Upper lobe of right lung (tissue), 1 donor: ENCODE measurements at regions of chr15 and their contacts with region 1.

Region 1: DNA sequence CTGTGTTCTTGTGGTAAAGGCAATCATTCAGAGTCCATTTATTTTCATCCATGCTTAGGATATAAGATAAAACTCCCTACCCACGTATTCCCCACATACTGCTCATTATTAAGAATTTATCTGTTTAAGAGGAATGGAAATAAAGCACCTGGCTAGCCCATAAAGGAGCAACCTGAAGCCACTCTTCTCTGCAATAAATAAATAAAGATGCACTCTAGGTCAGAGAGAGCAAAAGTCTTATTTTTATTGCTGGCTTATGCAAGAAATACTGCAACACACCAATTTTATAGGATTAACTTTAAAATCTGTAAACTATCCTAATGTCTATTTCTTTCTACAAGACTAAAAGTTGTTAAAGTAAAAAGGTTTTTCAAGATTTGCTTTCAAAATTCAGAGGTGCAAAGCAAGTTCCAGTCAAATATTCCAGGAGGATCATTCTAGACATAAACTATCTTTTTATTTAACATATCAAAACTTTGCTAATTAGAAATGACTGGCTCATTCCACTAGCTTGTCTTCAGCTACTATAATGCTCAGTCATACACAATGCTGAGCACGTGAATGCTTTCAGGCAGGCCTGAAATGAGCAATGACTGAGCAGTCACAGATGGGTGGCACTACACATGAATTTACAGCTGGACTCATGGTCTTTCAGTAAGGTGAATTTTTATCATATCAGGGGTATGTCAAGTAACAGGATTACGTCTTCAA is 7.1 kb downstream of the TJP1 start:
- DNase-seq: no peak
- ATAC-seq: peak; percentile 47
- H3K4me3 ChIP-seq: no peak overlapping the region
- H3K27ac ChIP-seq: no peak overlapping the region
- H3K4me1 ChIP-seq: peaks cover 44% of the 10 kb centered on the region
- H3K27me3 ChIP-seq: no peaks in the 10 kb centered on the region
- CTCF ChIP-seq: no peak

Region 2: DNA sequence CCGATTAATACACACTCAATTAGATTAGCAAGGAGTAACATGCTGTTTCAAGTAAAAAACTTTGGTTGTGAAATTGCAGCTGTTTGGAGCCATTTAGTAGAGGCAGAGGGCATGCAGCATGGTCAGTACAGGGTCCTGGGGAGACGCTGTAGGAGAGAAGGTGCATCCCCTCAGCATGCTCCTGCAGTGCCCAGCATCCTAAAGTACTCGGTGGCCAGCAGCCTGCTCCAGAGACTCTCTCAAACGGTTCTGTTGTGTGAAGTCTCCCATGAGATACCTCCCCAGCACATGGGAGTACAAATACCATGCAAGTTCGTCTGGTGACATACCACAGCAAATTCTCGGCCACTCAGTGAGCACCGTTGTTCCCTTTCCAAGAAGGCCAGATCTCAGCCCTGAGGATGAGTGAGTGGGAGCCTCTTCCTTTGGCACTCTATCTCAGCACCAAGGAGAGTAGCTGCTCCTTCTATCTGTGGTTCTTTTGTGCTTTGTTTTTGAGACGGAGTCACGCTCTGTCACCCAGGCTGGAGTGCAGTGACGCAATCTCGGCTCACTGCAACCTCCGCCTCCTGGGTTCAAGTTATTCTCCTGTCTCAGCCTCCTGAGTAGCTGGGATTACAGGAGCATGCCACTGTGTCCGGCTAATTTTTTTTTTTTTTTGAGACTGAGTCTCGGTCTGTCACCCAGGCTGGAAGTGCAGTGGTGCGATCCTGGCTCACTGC is 65.6 kb before region 1 on chr15:
- intact Hi-C with region 1: loop called (anchors 10 kb)
- DNase-seq: no peak
- ATAC-seq: peak; percentile 27
- H3K4me3 ChIP-seq: no peak overlapping the region
- H3K27ac ChIP-seq: no peak overlapping the region
- H3K4me1 ChIP-seq: peaks cover 5% of the 10 kb centered on the region
- H3K27me3 ChIP-seq: no peaks in the 10 kb centered on the region
- CTCF ChIP-seq: no peak

Region 3: DNA sequence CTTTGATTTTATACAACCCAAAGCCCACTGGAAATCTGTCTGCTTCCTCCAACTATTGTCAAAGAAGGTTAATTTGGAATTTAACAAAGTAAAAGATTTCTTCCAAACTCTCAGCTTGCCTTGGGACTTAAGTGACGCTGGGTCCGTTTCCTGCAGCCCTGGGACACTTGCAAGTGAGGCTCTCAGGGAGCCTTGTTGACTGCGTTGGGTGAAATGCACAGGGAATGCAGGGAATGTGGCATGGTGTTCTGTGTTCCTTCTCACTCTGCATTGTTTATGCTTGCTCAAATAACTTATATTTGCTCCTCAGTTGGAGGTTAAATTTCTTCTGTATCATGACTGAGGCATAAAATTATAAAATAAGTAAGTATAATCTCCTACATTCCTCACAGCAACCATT is 68.0 kb after region 1 on chr15:
- intact Hi-C with region 1: no loop called
- DNase-seq: no peak
- ATAC-seq: peak; percentile 72
- H3K4me3 ChIP-seq: no peak overlapping the region
- H3K27ac ChIP-seq: no peak overlapping the region
- H3K4me1 ChIP-seq: no peaks in the 10 kb centered on the region
- H3K27me3 ChIP-seq: no peaks in the 10 kb centered on the region
- CTCF ChIP-seq: no peak